Activated CD4-positive, alpha-beta memory T cell treated with anti-CD3 and anti-CD28 coated beads, Interleukin-2, amount 10 ng/mL, durations not matched to agents 7 days and 5 days (primary cell): ENCODE measurements at regions of chr12 and their contacts with region 1.

Region 1: GRCh38 chr12:48105862-48106680 is at the start of gene SENP1:
- DNase-seq: peak; percentile 91
- H3K4me3 Mint-ChIP-seq: peak within 1 kb of the TSS; percentile 94
- H3K27ac Mint-ChIP-seq: peak within 1 kb of the TSS; percentile 84
- H3K4me1 Mint-ChIP-seq: peaks cover 55% of the 10 kb centered on the region
- H3K27me3 Mint-ChIP-seq: no peaks in the 10 kb centered on the region
- total RNA-seq, gene SENP1: 42.4 to 43.7 TPM

Region 2: GRCh38 chr12:47920913-47921312 is 185.2 kb before region 1 on chr12:
- CTCF ChIA-PET with region 1: no interaction called
- POLR2A ChIA-PET with region 1: no interaction called
- DNase-seq: no peak
- H3K4me3 Mint-ChIP-seq: no peak overlapping the region
- H3K27ac Mint-ChIP-seq: no peak overlapping the region
- H3K4me1 Mint-ChIP-seq: peaks cover 1% of the 10 kb centered on the region
- H3K27me3 Mint-ChIP-seq: peaks cover 39% of the 10 kb centered on the region

Region 3: DNA sequence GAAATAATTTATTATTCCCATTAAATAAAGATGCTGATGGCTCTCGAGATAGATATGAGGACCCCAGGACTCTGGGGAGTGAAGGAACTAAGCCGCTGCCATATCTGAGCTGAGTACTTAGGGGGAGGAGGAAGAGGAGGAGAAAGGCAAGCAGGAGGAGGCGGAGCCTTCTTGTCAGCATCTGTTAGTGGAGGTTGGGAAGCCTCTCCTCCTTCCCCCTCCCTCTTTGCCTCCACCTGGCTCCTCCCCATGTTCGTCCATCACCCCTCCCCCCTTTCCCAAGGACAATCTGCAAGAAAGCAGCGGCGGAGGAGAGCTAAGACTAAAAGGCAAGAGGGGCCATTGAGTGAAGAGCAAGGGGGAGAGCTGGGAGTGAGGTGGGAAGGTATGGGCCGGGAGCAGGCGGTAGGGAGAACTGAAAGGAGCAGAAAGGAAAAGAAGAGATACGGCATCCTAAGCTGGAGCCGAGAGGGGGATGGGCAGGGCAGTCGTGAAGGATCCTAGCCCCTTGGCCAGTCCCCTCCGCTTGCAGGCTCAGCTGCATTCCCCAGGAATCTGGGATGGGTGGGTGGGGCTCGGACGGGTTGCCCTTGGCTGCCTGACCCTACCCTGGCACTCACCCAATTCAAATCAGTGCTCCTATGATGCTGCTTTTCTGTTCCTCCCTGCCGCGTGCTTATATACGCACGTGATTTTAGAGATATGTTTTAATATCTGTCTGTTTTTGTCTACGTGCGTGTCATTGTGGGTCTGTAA is 13.2 kb after region 1 on chr12 and contains the start of gene PFKM:
- CTCF ChIA-PET with region 1: interaction called, 12 read pairs
- POLR2A ChIA-PET with region 1: interaction called, 45 read pairs
- DNase-seq: peak; percentile 78
- H3K4me3 Mint-ChIP-seq: peak within 1 kb of the TSS; percentile 96
- H3K27ac Mint-ChIP-seq: peak within 1 kb of the TSS; percentile 33
- H3K4me1 Mint-ChIP-seq: peaks cover 21% of the 10 kb centered on the region
- H3K27me3 Mint-ChIP-seq: peaks cover 20% of the 10 kb centered on the region
- total RNA-seq, gene PFKM: 16.8 TPM

Region 4: GRCh38 chr12:48125985-48126384 is 19.9 kb after region 1 on chr12:
- CTCF ChIA-PET with region 1: no interaction called
- POLR2A ChIA-PET with region 1: interaction called, 45 read pairs
- DNase-seq: no peak
- H3K4me3 Mint-ChIP-seq: no peak overlapping the region
- H3K27ac Mint-ChIP-seq: no peak overlapping the region
- H3K4me1 Mint-ChIP-seq: peaks cover 2% of the 10 kb centered on the region
- H3K27me3 Mint-ChIP-seq: no peaks in the 10 kb centered on the region